GM12878 (cell line): ENCODE measurements at regions of chr2 and their contacts with region 1.

Region 1: DNA sequence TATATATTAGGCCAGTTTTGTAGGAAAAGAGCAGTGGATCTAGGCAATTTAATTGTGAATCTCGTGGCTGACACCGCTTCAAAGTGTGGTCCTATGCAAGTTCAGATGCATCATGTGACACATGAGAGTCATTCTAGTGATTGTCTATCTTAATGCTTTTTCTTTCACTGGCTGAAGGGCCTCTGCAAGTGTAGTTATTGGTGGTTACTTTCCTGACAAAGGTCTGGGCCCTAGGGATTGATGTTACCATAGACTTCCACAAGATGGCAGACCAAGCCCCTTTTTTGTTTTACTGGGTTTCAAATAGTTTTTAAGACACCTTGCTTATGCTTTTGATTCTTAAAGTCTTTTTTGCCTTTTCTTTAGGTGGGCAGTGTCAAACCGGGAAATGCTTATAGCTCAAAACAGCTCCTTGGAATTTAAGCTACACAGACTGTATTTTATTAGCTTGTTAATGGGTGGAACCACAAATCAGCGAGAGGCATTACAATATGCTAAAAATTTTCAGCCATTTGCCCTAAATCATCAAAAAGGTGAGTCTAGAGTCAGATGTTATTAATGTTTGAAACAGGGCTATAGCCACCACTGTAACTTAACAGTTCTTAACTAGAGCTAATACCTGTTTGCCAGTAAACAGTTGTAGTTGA is 25.9 kb downstream of the CD8A start:
- DNase-seq: no peak
- ATAC-seq: peak; percentile 90
- H3K4me3 ChIP-seq: no peak overlapping the region
- H3K27ac ChIP-seq: no peak overlapping the region
- H3K4me1 ChIP-seq: no peaks in the 10 kb centered on the region
- H3K27me3 ChIP-seq: no peaks in the 10 kb centered on the region
- CTCF ChIP-seq: peak; percentile 58 to 75 (median 68)
- EP300 ChIP-seq: no peak
- POLR2A ChIP-seq: no peak
- RAD21 ChIP-seq: peak; percentile 62

Region 2: DNA sequence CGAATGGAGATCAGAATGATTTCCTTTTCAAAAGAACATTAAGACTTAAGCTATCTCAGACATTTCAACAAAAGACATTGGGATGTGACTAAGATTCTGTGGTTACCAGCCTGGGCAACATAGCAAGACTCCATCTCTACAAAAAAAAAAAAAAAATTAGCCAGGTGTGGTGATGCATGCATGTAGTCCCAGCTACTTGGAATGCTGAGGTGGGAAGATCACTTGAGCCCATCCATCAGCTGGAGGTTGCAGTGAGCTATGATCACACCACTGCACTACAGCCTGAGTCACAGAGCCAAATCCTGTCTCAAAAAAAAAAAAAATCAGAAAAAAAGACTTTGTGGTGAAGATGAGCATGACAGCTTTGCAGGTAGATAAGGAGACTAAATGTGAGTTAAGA is 153.9 kb before region 1 on chr2:
- CTCF ChIA-PET with region 1: no interaction called
- POLR2A ChIA-PET with region 1: no interaction called
- RAD21 ChIA-PET with region 1: no interaction called
- SMC1A ChIA-PET with region 1: no interaction called
- in situ Hi-C with region 1: no loop called
- intact Hi-C with region 1: no loop called
- DNase-seq: no peak
- ATAC-seq: no peak
- H3K4me3 ChIP-seq: no peak overlapping the region
- H3K27ac ChIP-seq: no peak overlapping the region
- H3K4me1 ChIP-seq: no peaks in the 10 kb centered on the region
- H3K27me3 ChIP-seq: no peaks in the 10 kb centered on the region
- CTCF ChIP-seq: no peak
- EP300 ChIP-seq: no peak
- POLR2A ChIP-seq: no peak
- RAD21 ChIP-seq: no peak

Region 3: GRCh38 chr2:86747711-86748639 is 16.8 kb before region 1 on chr2:
- CTCF ChIA-PET with region 1: interaction called, 23 read pairs
- POLR2A ChIA-PET with region 1: no interaction called
- RAD21 ChIA-PET with region 1: no interaction called
- SMC1A ChIA-PET with region 1: interaction called, 26 read pairs
- in situ Hi-C with region 1: no loop called
- intact Hi-C with region 1: no loop called
- DNase-seq: no peak
- ATAC-seq: peak; percentile 71
- H3K4me3 ChIP-seq: no peak overlapping the region
- H3K27ac ChIP-seq: no peak overlapping the region
- H3K4me1 ChIP-seq: no peaks in the 10 kb centered on the region
- H3K27me3 ChIP-seq: no peaks in the 10 kb centered on the region
- CTCF ChIP-seq: no peak
- EP300 ChIP-seq: no peak
- POLR2A ChIP-seq: no peak
- RAD21 ChIP-seq: no peak

Region 4: DNA sequence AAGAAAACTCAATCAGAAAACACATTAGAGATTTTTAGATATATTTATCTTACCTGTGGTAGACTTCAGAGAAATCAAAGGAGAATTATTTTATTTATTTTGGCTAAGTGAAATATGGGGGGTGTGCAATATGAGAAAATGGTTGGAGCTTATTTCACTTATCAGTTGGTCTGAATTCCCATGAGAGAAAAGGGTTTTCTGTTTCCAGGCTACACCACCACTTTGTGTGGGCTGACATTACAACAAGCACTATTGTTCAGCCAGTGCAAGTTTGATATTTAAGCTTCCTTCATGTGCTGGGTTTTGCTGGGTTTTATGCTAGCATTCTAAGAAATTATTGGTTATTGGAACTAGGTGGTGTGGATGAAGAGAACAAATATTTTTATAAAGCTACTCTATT is 11.2 kb before region 1 on chr2:
- CTCF ChIA-PET with region 1: interaction called, 37 read pairs
- POLR2A ChIA-PET with region 1: no interaction called
- RAD21 ChIA-PET with region 1: interaction called, 7 read pairs
- SMC1A ChIA-PET with region 1: interaction called, 26 read pairs
- in situ Hi-C with region 1: no loop called
- intact Hi-C with region 1: no loop called
- DNase-seq: no peak
- ATAC-seq: no peak
- H3K4me3 ChIP-seq: no peak overlapping the region
- H3K27ac ChIP-seq: no peak overlapping the region
- H3K4me1 ChIP-seq: no peaks in the 10 kb centered on the region
- H3K27me3 ChIP-seq: no peaks in the 10 kb centered on the region
- CTCF ChIP-seq: no peak
- EP300 ChIP-seq: no peak
- POLR2A ChIP-seq: no peak
- RAD21 ChIP-seq: no peak

Region 5: DNA sequence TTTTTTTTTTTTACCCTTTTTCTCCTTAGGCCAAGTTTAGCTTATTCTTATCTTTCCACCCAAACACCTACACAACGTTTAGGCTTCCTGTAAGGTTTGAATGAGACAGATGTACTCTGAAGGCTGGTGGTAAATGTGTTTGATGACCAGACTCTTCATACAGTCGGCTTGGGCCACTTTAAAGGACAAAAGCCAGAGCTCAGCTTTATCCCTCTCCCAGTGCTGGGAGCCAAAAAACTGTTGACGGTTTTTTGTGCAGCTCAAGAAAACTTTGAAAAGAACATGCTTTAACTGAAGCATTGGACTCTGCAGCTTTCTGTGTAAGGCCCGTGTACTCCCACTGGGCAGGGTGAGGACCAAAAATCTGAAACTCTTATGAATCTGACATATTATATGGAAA is 10.6 kb after region 1 on chr2:
- CTCF ChIA-PET with region 1: interaction called, 13 read pairs
- POLR2A ChIA-PET with region 1: no interaction called
- RAD21 ChIA-PET with region 1: interaction called, 3 read pairs
- SMC1A ChIA-PET with region 1: interaction called, 17 read pairs
- in situ Hi-C with region 1: no loop called
- intact Hi-C with region 1: no loop called
- DNase-seq: no peak
- ATAC-seq: no peak
- H3K4me3 ChIP-seq: no peak overlapping the region
- H3K27ac ChIP-seq: no peak overlapping the region
- H3K4me1 ChIP-seq: no peaks in the 10 kb centered on the region
- H3K27me3 ChIP-seq: no peaks in the 10 kb centered on the region
- CTCF ChIP-seq: no peak
- EP300 ChIP-seq: no peak
- POLR2A ChIP-seq: no peak
- RAD21 ChIP-seq: no peak

Region 6: DNA sequence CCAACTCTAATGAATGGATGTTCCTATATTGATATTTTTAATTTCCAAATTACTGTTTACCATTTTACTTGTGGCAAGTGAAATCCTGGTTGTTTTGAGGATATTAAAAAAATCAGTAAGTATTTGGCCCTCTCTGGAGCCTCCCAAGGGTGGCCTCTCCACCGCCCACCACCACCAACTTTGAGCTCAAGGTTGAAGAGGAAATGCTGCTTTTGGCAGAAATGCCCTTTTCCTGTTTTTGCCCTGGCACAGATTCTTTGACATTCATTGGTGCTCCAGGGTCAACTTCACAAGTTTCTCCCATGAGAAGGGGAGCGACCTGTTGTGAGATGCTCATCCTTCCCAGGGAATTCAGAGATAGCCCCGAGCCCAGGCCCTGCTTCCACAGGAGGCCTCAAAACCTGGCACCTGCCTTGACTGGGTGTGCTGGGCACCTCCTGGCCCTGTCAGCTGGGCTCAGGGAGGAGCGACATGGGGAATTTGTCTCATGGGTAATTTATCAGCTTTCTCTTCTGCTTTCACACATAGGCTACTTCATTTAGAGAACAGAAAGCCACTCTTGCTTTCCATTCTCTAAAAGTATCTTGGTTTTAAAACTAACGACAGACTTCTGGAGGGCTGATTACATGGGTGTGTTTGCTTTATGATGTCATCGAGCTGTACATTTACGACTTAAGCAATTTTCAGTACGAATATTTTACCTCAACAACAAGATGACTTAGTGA is 19.0 kb after region 1 on chr2:
- CTCF ChIA-PET with region 1: interaction called, 13 read pairs
- POLR2A ChIA-PET with region 1: interaction called, 3 read pairs
- RAD21 ChIA-PET with region 1: interaction called, 6 read pairs
- SMC1A ChIA-PET with region 1: interaction called, 7 read pairs
- in situ Hi-C with region 1: no loop called
- intact Hi-C with region 1: no loop called
- DNase-seq: peak; percentile 61
- ATAC-seq: peak; percentile 99
- H3K4me3 ChIP-seq: no peak overlapping the region; the same call in 1 of the 2 replicates
- H3K27ac ChIP-seq: no peak overlapping the region
- H3K4me1 ChIP-seq: peaks cover 12% of the 10 kb centered on the region
- H3K27me3 ChIP-seq: peaks cover 0 to 2% of the 10 kb centered on the region in 2 experiments; a peak in 1 of 4 replicates
- CTCF ChIP-seq: no peak
- EP300 ChIP-seq: peak; percentile 63 to 87; a peak in 3 of 4 replicates
- POLR2A ChIP-seq: no peak
- RAD21 ChIP-seq: no peak

Region 7: GRCh38 chr2:86808315-86809161 is 43.8 kb after region 1 on chr2:
- CTCF ChIA-PET with region 1: interaction called, 11 read pairs
- POLR2A ChIA-PET with region 1: no interaction called
- RAD21 ChIA-PET with region 1: interaction called, 6 read pairs
- SMC1A ChIA-PET with region 1: interaction called, 11 read pairs
- in situ Hi-C with region 1: no loop called
- intact Hi-C with region 1: no loop called
- DNase-seq: peak; percentile 40
- ATAC-seq: peak; percentile 99
- H3K4me3 ChIP-seq: peak overlapping the region; percentile 40; the same call in 1 of the 2 replicates
- H3K27ac ChIP-seq: no peak overlapping the region
- H3K4me1 ChIP-seq: peaks cover 5% of the 10 kb centered on the region; the same call in 1 of the 2 replicates
- H3K27me3 ChIP-seq: peaks cover 11 to 19% of the 10 kb centered on the region in 2 experiments
- CTCF ChIP-seq: peak; percentile 92 to 98 (median 92); a peak in 5 of 6 replicates
- EP300 ChIP-seq: no peak
- POLR2A ChIP-seq: no peak
- RAD21 ChIP-seq: peak; percentile 94